ENCODE measurements at regions of chr7 and their contacts with region 1.

Region 1: GRCh38 chr7:29408841-29409243 is 154.8 kb upstream of the PRR15 start:
- DNase-seq: peak; percentile 5 to 77 (median 55)
- ATAC-seq: peak; percentile 67
- H3K4me3 ChIP-seq: no peak overlapping the region
- H3K4me3 Mint-ChIP-seq: no peak overlapping the region
- H3K27ac ChIP-seq: no peak overlapping the region
- H3K27ac Mint-ChIP-seq: no peak overlapping the region
- H3K4me1 ChIP-seq: no peaks in the 10 kb centered on the region
- H3K4me1 Mint-ChIP-seq: no peaks in the 10 kb centered on the region
- H3K27me3 ChIP-seq: no peaks in the 10 kb centered on the region
- H3K27me3 Mint-ChIP-seq: peaks cover 4% of the 10 kb centered on the region
- CTCF ChIP-seq: peak; percentile 86

Region 2: GRCh38 chr7:29105752-29106668 is 302.8 kb before region 1 on chr7:
- CTCF ChIA-PET with region 1: interaction called, 4 read pairs
- POLR2A ChIA-PET with region 1: no interaction called
- intact Hi-C with region 1: loop called in 1 of 2 experiments (anchors 5 kb)
- DNase-seq: peak in 2 of 9 experiments; percentile 40 to 54
- ATAC-seq: no peak
- H3K4me3 ChIP-seq: no peak overlapping the region
- H3K4me3 Mint-ChIP-seq: no peak overlapping the region
- H3K27ac ChIP-seq: no peak overlapping the region
- H3K27ac Mint-ChIP-seq: no peak overlapping the region
- H3K4me1 ChIP-seq: no peaks in the 10 kb centered on the region
- H3K4me1 Mint-ChIP-seq: peaks cover 3% of the 10 kb centered on the region
- H3K27me3 ChIP-seq: no peaks in the 10 kb centered on the region
- H3K27me3 Mint-ChIP-seq: no peaks in the 10 kb centered on the region
- CTCF ChIP-seq: no peak

Region 3: DNA sequence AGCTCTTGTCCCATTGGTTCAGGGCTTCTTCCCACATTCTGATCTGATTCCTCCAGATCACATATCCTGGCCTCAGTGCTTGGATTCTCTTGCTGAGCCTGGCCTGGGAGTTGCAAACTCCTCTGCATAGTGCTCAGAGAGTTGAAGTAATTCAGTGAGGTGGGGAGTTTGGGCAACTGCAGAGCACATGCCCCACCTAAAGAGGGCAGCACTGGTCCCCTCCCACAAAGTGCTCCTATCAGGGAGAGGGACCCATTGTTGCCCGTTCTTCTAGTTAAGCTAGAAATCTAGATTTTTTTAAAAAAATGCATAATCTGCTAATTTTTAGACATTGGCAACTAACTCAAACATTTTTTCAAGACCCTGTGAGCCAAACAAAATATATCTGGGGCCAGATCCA is 169.2 kb before region 1 on chr7:
- CTCF ChIA-PET with region 1: interaction called, 8 read pairs
- POLR2A ChIA-PET with region 1: no interaction called
- intact Hi-C with region 1: loop called (anchors 1 to 2 kb)
- DNase-seq: peak in 2 of 9 experiments; percentile 34 to 47
- ATAC-seq: no peak
- H3K4me3 ChIP-seq: no peak overlapping the region
- H3K4me3 Mint-ChIP-seq: no peak overlapping the region
- H3K27ac ChIP-seq: no peak overlapping the region
- H3K27ac Mint-ChIP-seq: no peak overlapping the region
- H3K4me1 ChIP-seq: no peaks in the 10 kb centered on the region
- H3K4me1 Mint-ChIP-seq: peaks cover 15% of the 10 kb centered on the region
- H3K27me3 ChIP-seq: no peaks in the 10 kb centered on the region
- H3K27me3 Mint-ChIP-seq: no peaks in the 10 kb centered on the region
- CTCF ChIP-seq: peak; percentile 34

Region 4: DNA sequence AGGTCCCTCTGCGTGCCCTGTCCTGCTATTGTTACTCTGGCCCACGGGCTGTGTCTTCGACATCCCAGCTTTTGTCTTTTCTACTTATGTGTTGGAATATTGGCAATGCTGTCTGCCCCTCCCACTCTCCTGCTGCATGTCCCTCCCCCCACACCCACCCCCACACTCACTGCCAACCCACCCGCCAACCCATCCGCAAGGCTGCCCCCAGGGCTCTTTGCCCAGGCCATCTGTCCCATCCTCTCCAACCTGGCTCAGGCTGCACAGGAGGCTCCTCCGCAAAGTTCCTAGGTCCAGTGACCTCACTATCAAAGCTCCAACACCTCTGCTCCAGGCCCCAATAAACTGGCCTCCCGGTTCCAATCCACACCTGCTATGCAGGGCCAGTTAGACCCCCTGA is 12.3 kb before region 1 on chr7:
- CTCF ChIA-PET with region 1: interaction called, 20 read pairs
- POLR2A ChIA-PET with region 1: no interaction called
- intact Hi-C with region 1: no loop called
- DNase-seq: no peak
- ATAC-seq: no peak
- H3K4me3 ChIP-seq: no peak overlapping the region
- H3K4me3 Mint-ChIP-seq: no peak overlapping the region
- H3K27ac ChIP-seq: no peak overlapping the region
- H3K27ac Mint-ChIP-seq: no peak overlapping the region
- H3K4me1 ChIP-seq: no peaks in the 10 kb centered on the region
- H3K4me1 Mint-ChIP-seq: peaks cover 3% of the 10 kb centered on the region
- H3K27me3 ChIP-seq: no peaks in the 10 kb centered on the region
- H3K27me3 Mint-ChIP-seq: no peaks in the 10 kb centered on the region
- CTCF ChIP-seq: no peak

Region 5: GRCh38 chr7:30764030-30764975 is 1355.5 kb after region 1 on chr7:
- CTCF ChIA-PET with region 1: no interaction called
- POLR2A ChIA-PET with region 1: no interaction called
- intact Hi-C with region 1: no loop called
- DNase-seq: no peak
- ATAC-seq: no peak
- H3K4me3 ChIP-seq: no peak overlapping the region
- H3K4me3 Mint-ChIP-seq: no peak overlapping the region
- H3K27ac ChIP-seq: no peak overlapping the region
- H3K27ac Mint-ChIP-seq: no peak overlapping the region
- H3K4me1 ChIP-seq: no peaks in the 10 kb centered on the region
- H3K4me1 Mint-ChIP-seq: no peaks in the 10 kb centered on the region
- H3K27me3 ChIP-seq: no peaks in the 10 kb centered on the region
- H3K27me3 Mint-ChIP-seq: peaks cover 15% of the 10 kb centered on the region
- CTCF ChIP-seq: no peak